ENCODE measurements at regions of chr10 and their contacts with region 1.

Region 1: DNA sequence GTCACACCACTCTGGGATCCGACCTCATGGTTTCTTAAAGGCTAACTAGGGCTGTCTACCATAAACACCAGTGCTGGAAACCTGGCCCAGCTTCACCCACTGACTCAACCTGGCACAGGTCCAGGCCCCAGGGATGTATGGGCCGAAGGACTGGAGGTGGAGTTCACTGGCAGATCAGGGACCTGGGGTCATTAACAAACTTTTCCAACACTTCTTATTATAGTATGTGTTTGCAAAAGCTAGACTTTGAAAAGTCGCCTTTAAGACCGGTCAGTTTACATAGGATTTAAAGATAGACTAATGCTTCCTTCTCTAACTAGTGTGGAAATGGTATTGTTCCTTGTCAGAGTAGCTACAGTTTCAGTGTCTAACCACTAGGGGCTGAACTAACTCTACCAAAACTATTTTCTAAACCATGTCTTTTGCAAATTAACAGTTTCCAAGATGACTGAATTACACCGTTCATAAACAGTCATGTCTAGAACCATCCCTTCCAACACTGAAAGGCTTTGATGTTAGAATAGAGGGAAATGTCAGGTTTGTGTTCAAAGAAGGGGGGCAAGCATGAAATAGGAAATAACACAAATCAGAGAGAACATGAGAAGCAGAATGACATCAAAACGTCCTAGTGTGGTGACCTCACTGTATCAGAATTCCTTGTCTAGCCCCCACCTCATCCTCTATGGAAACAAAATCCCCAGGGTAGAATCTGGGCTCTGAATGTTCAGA is 29.7 kb downstream of the STN1 start:
- DNase-seq: peak; percentile 54 to 64
- ATAC-seq: peak; percentile 52 to 78 (median 72)
- H3K4me3 ChIP-seq: no peak overlapping the region
- H3K27ac ChIP-seq: peak overlapping the region in 8 of 10 donors; percentile 14 to 67 (median 40)
- H3K4me1 ChIP-seq: peaks cover 8 to 59% (median 34%) of the 10 kb centered on the region in 9 donors
- H3K27me3 ChIP-seq: no peaks in the 10 kb centered on the region
- CTCF ChIP-seq: peak; percentile 75 to 93 (median 82)

Region 2: DNA sequence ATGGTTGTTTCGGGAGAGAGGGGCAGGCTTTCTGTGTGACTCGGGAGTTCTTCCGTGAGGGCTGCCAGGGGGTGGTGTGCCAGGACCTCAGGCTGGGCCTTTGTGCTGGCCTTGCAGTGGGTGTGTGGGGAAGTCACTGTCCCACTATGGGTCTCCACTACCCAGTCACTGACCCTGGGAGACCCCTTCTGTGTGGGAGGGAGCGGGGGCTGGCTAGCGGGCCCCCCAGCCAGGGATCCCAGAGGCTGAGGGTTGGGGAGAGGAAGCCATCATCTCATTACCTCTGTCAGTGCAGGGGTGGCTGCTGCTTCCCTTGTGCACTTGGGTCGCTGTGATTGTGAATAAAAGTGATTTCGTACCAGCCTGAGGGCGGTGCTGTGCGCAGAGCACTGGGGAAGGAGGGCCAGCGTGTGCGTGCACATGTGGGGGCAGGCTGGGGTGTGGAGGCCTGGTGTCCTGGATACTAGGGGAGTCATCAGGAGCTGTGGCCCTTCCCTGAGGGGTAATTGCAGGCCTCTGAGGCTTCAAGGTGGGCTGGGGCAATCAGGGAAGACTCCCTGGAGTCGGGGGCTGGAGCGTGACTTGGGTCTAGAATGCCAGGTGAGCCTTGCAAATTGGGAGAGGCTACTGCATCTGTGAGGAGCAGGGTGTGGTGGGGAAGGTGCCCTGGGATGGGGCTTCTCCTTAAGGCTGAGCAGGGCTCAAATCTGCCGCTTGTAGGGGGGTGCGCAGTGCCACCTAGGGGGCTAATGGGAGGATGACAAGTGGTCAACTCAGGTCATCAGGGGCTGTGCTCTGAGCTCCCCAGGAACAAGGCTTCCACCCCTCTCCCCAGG is 295.9 kb before region 1 on chr10:
- intact Hi-C with region 1: loop called in 1 of 10 experiments (anchors 10 kb)
- DNase-seq: no peak
- ATAC-seq: peak in 7 of 8 donors; percentile 11 to 49 (median 43)
- H3K4me3 ChIP-seq: no peak overlapping the region
- H3K27ac ChIP-seq: no peak overlapping the region
- H3K4me1 ChIP-seq: peaks cover 0 to 14% (median 6%) of the 10 kb centered on the region in 9 donors
- H3K27me3 ChIP-seq: no peaks in the 10 kb centered on the region
- CTCF ChIP-seq: peak; percentile 23 to 70 (median 57)

Region 3: DNA sequence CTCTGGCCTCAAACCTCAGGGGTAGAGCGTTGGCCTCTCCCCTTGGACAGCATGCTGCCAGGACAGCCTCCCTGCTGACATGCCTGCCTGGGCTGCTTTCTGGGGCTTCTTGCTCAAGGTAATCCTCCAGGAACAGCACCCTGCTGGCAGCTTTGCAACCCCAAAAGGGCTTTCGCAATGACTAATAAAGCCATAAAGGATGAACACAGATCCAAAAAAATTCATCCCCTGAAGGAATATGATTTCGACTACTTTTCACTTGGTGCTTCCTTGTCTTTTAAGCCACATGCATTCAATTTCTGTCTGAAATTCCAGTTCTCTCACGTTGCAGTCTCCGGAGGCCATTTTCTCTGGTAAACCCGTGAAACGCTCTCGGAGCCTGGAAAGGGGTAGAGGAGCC is 17.8 kb before region 1 on chr10:
- intact Hi-C with region 1: no loop called
- DNase-seq: no peak
- ATAC-seq: no peak
- H3K4me3 ChIP-seq: no peak overlapping the region
- H3K27ac ChIP-seq: no peak overlapping the region
- H3K4me1 ChIP-seq: no peaks in the 10 kb centered on the region
- H3K27me3 ChIP-seq: no peaks in the 10 kb centered on the region
- CTCF ChIP-seq: no peak

Region 4: GRCh38 chr10:103966671-103967447 is 78.6 kb after region 1 on chr10 and contains the start of gene SLK:
- intact Hi-C with region 1: loop called in 3 of 10 experiments (anchors 5 kb)
- DNase-seq: peak; percentile 83 to 89
- ATAC-seq: peak; percentile 95 to 99 (median 96)
- H3K4me3 ChIP-seq: peak within 1 kb of the TSS; percentile 69 to 95 (median 86)
- H3K27ac ChIP-seq: peak within 1 kb of the TSS; percentile 89 to 99 (median 97)
- H3K4me1 ChIP-seq: peaks cover 0 to 47% (median 31%) of the 10 kb centered on the region in 9 donors
- H3K27me3 ChIP-seq: no peaks in the 10 kb centered on the region
- CTCF ChIP-seq: no peak
- total RNA-seq, gene SLK: 30.4 to 63.6 (median 44.2) TPM

Region 5: DNA sequence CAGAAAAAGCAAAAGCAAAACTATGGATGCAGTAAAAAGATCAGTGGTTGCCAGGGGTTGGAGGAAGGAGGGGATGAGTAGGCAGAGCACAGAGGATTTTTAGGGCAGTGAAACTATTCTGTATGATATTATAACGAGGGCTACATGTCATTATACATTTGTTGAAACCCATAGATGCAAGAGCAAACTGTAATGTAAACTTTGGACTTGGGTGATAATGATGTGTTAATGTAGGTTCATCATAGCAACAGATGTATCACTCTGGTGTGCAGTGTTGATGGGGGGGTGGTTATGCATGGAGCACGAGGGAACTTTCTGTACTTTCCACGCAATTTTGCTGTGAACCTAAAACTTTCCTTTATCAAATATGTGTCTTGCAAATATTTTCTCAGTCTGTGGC is 101.8 kb after region 1 on chr10:
- intact Hi-C with region 1: loop called in 2 of 10 experiments (anchors 10 kb)
- DNase-seq: no peak
- ATAC-seq: no peak
- H3K4me3 ChIP-seq: no peak overlapping the region
- H3K27ac ChIP-seq: no peak overlapping the region
- H3K4me1 ChIP-seq: peaks cover 0 to 49% (median 31%) of the 10 kb centered on the region in 9 donors
- H3K27me3 ChIP-seq: no peaks in the 10 kb centered on the region
- CTCF ChIP-seq: no peak

Region 6: DNA sequence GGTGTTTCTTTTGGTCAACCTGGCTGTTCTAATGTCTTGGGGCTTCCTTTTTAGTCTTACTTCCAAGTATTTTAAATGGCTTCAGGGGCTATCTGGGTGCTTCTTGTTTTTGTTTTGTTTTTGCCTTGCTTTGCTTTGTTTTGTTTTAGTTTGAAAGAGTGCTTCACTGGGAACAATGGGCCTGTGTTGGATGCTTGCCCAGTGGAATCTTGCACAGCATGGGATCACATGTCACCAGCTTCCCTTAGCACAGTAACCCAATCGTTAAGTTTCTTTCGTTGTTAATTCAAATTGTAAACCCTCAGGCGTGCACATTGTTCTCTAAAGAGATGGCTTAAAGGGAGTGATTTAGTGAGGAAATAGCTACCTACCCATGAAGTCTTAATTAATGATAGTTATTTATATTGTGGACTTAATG is 188.5 kb after region 1 on chr10:
- intact Hi-C with region 1: loop called in 1 of 10 experiments (anchors 1 kb)
- DNase-seq: peak; percentile 28 to 82
- ATAC-seq: peak; percentile 71 to 95 (median 92)
- H3K4me3 ChIP-seq: no peak overlapping the region
- H3K27ac ChIP-seq: peak overlapping the region in 8 of 10 donors; percentile 25 to 76 (median 46)
- H3K4me1 ChIP-seq: peaks cover 0 to 18% (median 12%) of the 10 kb centered on the region in 9 donors
- H3K27me3 ChIP-seq: no peaks in the 10 kb centered on the region
- CTCF ChIP-seq: no peak

Region 7: GRCh38 chr10:104209575-104210198 is 321.4 kb after region 1 on chr10:
- intact Hi-C with region 1: loop called (anchors 2 to 10 kb)
- DNase-seq: peak in 1 of 2 donors; percentile 35
- ATAC-seq: peak in 5 of 8 donors; percentile 47 to 77 (median 61)
- H3K4me3 ChIP-seq: no peak overlapping the region
- H3K27ac ChIP-seq: no peak overlapping the region
- H3K4me1 ChIP-seq: peaks cover 0 to 7% (median 0%) of the 10 kb centered on the region in 9 donors
- H3K27me3 ChIP-seq: peaks cover 0 to 3% (median 0%) of the 10 kb centered on the region in 7 donors
- CTCF ChIP-seq: peak in 8 of 9 donors; percentile 14 to 71 (median 66)

Region 8: GRCh38 chr10:104350127-104350635 is 461.9 kb after region 1 on chr10:
- intact Hi-C with region 1: loop called in 1 of 10 experiments (anchors 10 kb)
- DNase-seq: peak in 1 of 2 donors; percentile 48
- ATAC-seq: peak; percentile 56 to 84 (median 74)
- H3K4me3 ChIP-seq: peak overlapping the region in 6 of 10 donors; percentile 9 to 40 (median 30)
- H3K27ac ChIP-seq: peak overlapping the region; percentile 1 to 90 (median 58)
- H3K4me1 ChIP-seq: peaks cover 0 to 76% (median 20%) of the 10 kb centered on the region in 9 donors
- H3K27me3 ChIP-seq: no peaks in the 10 kb centered on the region
- CTCF ChIP-seq: peak; percentile 53 to 86 (median 74)

Measured in heart right ventricle (tissue), 16 donors.